Mammary epithelial cell (primary cell): ENCODE measurements at regions of chr1 and their contacts with region 1.

Region 1: GRCh38 chr1:35641233-35641866 is at the start of gene PSMB2:
- DNase-seq: peak; percentile 95
- H3K4me3 ChIP-seq: peak within 1 kb of the TSS; percentile 87 to 99 (median 99)
- H3K27ac ChIP-seq: peak within 1 kb of the TSS; percentile 98
- H3K4me1 ChIP-seq: peaks cover 14% of the 10 kb centered on the region
- H3K27me3 ChIP-seq: peaks cover 2% of the 10 kb centered on the region
- CTCF ChIP-seq: no peak
- total RNA-seq, gene PSMB2: 24.3 to 82.1 TPM

Region 2: DNA sequence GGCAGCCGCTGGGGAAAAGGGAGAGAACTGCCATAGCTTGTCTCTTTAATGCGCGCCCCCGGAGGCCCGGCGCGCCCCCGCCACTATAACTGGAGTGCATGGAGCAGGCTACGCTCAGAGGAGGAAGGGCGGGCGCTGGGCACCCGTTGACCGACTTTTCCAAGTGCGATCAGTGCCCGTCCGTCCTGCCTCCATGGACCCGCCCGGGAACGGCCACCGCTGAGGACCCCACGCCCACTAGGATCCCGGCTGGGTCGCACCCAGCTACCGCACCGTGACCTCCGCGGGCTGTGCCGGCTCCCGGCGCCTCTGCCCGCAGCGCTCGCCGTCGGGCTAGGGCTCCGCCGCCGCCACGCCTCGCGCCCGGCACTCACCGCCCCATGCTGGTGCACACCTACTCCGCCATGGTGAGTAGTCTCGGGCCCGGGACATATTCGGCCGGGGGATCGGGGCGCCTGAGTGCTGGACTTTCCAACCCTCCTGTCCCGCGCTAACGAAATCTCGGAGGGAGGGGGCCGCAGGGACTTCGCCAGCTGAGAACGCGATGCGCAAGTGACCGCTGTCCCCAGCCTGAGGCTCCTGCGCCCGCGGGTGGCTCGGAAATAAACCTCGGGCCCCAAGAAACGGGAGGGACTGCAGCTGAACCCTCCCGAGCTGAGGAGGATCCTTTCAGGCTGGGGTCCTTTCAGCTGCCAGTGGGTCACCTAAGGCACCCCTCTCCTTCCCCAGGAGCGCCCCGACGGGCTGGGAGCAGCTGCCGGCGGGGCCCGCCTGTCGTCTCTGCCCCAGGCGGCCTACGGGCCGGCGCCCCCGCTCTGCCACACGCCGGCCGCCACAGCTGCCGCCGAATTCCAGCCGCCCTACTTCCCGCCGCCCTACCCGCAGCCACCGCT is 67.9 kb before region 1 on chr1 and contains the start of gene TFAP2E:
- CTCF ChIA-PET with region 1: interaction called, 5 read pairs
- dilution Hi-C with region 1: no loop called
- in situ Hi-C with region 1: no loop called
- intact Hi-C with region 1: loop called (anchors 2 kb)
- DNase-seq: peak; percentile 41
- H3K4me3 ChIP-seq: peak within 1 kb of the TSS; percentile 56 to 68 (median 62)
- H3K27ac ChIP-seq: no peak within 1 kb of the TSS
- H3K4me1 ChIP-seq: peaks cover 21% of the 10 kb centered on the region
- H3K27me3 ChIP-seq: no peaks in the 10 kb centered on the region
- CTCF ChIP-seq: no peak
- total RNA-seq, gene TFAP2E: 0.17 to 0.71 TPM

Region 3: GRCh38 chr1:35691080-35691479 is 49.7 kb after region 1 on chr1:
- CTCF ChIA-PET with region 1: no interaction called
- dilution Hi-C with region 1: no loop called
- in situ Hi-C with region 1: no loop called
- intact Hi-C with region 1: loop called (anchors 5 kb)
- DNase-seq: no peak
- H3K4me3 ChIP-seq: no peak overlapping the region
- H3K27ac ChIP-seq: no peak overlapping the region
- H3K4me1 ChIP-seq: no peaks in the 10 kb centered on the region
- H3K27me3 ChIP-seq: peaks cover 4% of the 10 kb centered on the region
- CTCF ChIP-seq: no peak

Region 4: GRCh38 chr1:35715568-35716002 is 74.2 kb after region 1 on chr1:
- CTCF ChIA-PET with region 1: interaction called, 4 read pairs
- dilution Hi-C with region 1: no loop called
- in situ Hi-C with region 1: no loop called
- intact Hi-C with region 1: loop called (anchors 2 kb)
- DNase-seq: peak; percentile 57
- H3K4me3 ChIP-seq: no peak overlapping the region
- H3K27ac ChIP-seq: no peak overlapping the region
- H3K4me1 ChIP-seq: peaks cover 18% of the 10 kb centered on the region
- H3K27me3 ChIP-seq: no peaks in the 10 kb centered on the region
- CTCF ChIP-seq: peak; percentile 87 to 92